Pancreas (tissue), 10 donors: ENCODE measurements at regions of chr11 and their contacts with region 1.

Region 1: DNA sequence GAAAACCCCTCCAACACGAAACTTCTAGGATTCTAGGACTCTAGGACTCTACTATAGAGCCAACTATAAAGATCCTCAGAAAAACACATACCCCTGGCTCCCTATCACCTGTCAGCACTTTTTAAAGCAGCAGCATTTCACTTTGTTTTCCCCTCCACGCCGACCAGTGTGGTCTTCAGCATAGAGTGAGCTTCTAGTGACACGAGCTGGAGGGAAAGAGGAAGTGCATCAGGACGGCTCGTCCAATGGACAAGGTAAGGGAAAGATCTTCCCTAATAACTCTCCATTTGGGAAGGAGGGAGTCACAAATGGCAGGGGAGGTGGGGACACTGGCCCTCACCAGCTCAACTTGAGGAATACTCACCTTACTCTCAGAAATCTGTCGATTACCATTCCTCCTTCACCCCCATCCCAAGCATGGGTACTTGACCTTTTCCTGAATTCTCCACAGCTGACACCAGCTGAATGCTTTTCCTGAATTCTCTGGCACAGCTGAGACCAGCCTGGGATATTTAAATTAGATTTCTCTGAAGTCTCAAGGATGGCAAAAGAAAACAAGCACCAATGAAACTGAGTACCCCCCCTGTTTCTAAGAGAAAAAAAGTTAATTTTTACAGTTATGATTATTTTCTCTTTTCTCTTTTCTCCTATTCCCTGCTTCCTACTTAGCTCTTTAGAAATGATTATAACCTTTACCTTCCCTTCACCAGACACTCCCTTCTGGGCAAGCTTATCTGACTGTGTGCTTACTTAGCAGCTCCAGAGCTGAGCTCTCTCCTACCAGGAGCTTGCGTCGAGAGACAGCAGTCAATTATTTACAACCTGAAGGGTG is 33.3 kb upstream of the NNMT start:
- DNase-seq: peak in 2 of 6 donors; percentile 24 to 38
- ATAC-seq: peak in 3 of 4 donors; percentile 49 to 78 (median 67)
- H3K4me3 ChIP-seq: no peak overlapping the region
- H3K27ac ChIP-seq: no peak overlapping the region
- H3K4me1 ChIP-seq: peaks cover 0 to 9% (median 8%) of the 10 kb centered on the region in 3 donors
- H3K27me3 ChIP-seq: no peaks in the 10 kb centered on the region
- CTCF ChIP-seq: peak in 3 of 4 donors; percentile 39 to 44 (median 39)

Region 2: GRCh38 chr11:113896156-113896879 is 366.6 kb before region 1 on chr11:
- intact Hi-C with region 1: loop called in 2 of 3 experiments (anchors 5 to 10 kb)
- DNase-seq: peak in 2 of 6 donors; percentile 40 to 62
- ATAC-seq: peak; percentile 70 to 91 (median 86)
- H3K4me3 ChIP-seq: no peak overlapping the region
- H3K27ac ChIP-seq: no peak overlapping the region
- H3K4me1 ChIP-seq: no peaks in the 10 kb centered on the region
- H3K27me3 ChIP-seq: no peaks in the 10 kb centered on the region
- CTCF ChIP-seq: peak; percentile 58 to 70 (median 65)

Region 3: DNA sequence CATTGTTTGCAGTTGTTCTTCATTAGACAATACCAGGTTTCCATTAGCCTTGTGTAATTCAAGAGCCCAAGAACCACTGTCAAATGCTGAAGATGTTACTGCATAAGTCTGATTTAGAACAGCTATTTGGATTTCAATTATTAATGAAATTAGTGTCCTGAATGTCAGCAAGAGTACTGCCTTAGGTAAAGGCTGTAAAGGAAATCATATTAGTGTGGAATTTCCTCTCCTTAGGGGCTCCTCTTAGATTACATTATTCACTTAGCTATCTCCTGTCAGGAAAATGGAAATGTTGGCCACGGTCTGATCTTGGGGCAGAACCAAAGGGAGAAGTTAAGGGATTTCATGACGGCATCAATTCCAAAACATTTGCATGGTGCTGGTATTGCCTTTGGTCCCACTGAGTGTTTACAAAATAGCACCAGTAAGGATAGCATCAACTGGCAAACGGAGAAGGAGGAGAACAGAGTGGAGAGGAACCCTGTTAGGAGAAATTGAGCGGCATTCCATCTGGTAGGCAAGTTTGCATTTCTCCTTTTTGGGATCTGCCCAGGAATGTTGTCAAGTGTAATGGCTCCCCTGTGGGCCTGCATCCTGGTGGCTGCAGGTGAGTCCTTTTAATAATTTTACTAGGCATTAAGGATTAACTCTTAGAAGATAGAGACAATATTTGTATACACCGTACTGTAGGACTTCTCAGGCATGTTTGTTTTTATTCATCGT is 358.4 kb before region 1 on chr11 and contains the start of gene HTR3B:
- intact Hi-C with region 1: loop called in 2 of 3 experiments (anchors 5 to 10 kb)
- DNase-seq: no peak
- ATAC-seq: no peak
- H3K4me3 ChIP-seq: no peak within 1 kb of the TSS
- H3K27ac ChIP-seq: no peak within 1 kb of the TSS
- H3K4me1 ChIP-seq: peaks cover 7 to 10% (median 8%) of the 10 kb centered on the region in 3 donors
- H3K27me3 ChIP-seq: no peaks in the 10 kb centered on the region
- CTCF ChIP-seq: no peak
- total RNA-seq, gene HTR3B: not detected

Region 4: DNA sequence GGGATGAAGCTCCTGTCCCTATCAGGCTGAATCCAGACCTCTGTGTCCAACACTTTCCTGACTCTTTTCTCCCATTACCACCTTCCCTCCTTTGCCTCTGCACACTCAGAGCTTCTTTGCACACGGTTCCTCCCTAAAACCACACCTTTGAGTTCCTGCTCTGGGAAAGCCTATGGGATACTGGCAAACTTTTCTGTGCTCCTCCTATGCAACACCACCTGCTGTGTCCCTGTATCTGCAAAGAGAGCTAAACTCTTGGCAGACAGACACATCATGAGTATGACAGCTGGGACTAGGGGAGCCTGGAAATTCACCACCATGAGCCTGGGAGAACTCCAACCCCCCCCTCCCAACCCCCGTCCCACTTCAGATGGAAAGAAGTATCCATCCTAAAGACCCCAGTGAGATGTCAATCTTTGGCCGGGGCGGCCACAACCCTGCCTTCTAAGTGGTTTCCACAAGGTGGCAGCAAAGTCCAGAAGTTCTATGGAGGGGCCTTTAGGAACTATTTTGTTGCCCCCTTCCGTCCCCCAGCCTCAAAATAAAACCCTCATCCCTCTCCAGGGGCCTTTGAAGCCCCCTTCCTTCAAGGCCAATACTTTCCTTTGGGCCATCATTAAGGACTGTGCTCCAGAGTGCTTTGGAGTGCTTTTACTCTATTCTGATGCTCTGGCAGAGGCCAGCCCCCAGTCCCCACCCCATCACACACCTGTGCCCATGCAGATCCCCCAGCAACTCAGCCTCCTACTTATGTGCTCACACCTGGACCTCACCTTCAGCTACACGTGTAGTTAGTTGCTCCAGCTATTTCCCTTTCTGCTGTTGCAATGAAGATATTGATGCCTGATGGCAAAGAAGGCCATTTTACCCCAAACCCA is 268.6 kb before region 1 on chr11:
- intact Hi-C with region 1: loop called in 2 of 3 experiments (anchors 5 kb)
- DNase-seq: peak in 1 of 6 donors; percentile 42
- ATAC-seq: peak; percentile 51 to 72 (median 64)
- H3K4me3 ChIP-seq: no peak overlapping the region
- H3K27ac ChIP-seq: no peak overlapping the region
- H3K4me1 ChIP-seq: no peaks in the 10 kb centered on the region
- H3K27me3 ChIP-seq: peaks cover 0 to 3% (median 1%) of the 10 kb centered on the region in 4 donors
- CTCF ChIP-seq: peak; percentile 41 to 64 (median 56)

Region 5: GRCh38 chr11:114036156-114036811 is 226.6 kb before region 1 on chr11:
- intact Hi-C with region 1: loop called in 2 of 3 experiments (anchors 2 to 10 kb)
- DNase-seq: peak; percentile 75 to 95 (median 91)
- ATAC-seq: peak; percentile 94 to 99 (median 98)
- H3K4me3 ChIP-seq: peak overlapping the region in 3 of 4 donors; percentile 9 to 46 (median 28)
- H3K27ac ChIP-seq: peak overlapping the region in 3 of 4 donors; percentile 12 to 33 (median 23)
- H3K4me1 ChIP-seq: peaks cover 0 to 4% (median 3%) of the 10 kb centered on the region in 3 donors
- H3K27me3 ChIP-seq: no peaks in the 10 kb centered on the region
- CTCF ChIP-seq: peak; percentile 83 to 92 (median 88)

Region 6: GRCh38 chr11:114366331-114367243 is 103.7 kb after region 1 on chr11:
- intact Hi-C with region 1: no loop called
- DNase-seq: no peak
- ATAC-seq: no peak
- H3K4me3 ChIP-seq: no peak overlapping the region
- H3K27ac ChIP-seq: no peak overlapping the region
- H3K4me1 ChIP-seq: no peaks in the 10 kb centered on the region
- H3K27me3 ChIP-seq: peaks cover 0 to 7% (median 1%) of the 10 kb centered on the region in 4 donors
- CTCF ChIP-seq: no peak